ENCODE measurements at regions of chrX and their contacts with region 1.

Region 1: GRCh38 chrX:79366873-79367749 is at the start of gene ITM2A:
- DNase-seq: peak; percentile 64 to 79 (median 71)
- H3K4me3 ChIP-seq: peak within 1 kb of the TSS; percentile 65 to 84
- H3K4me3 Mint-ChIP-seq: peak within 1 kb of the TSS; percentile 91 to 99 (median 94)
- H3K27ac ChIP-seq: peak within 1 kb of the TSS; percentile 95
- H3K27ac Mint-ChIP-seq: peak within 1 kb of the TSS; percentile 97 to 99 (median 97)
- H3K4me1 ChIP-seq: peaks cover 27% of the 10 kb centered on the region
- H3K4me1 Mint-ChIP-seq: peaks cover 17 to 27% (median 22%) of the 10 kb centered on the region in 4 donors
- H3K27me3 ChIP-seq: no peaks in the 10 kb centered on the region
- H3K27me3 Mint-ChIP-seq: no peaks in the 10 kb centered on the region
- total RNA-seq, gene ITM2A: 147 to 169 TPM

Region 2: GRCh38 chrX:79161655-79162054 is 205.5 kb before region 1 on chrX:
- CTCF ChIA-PET with region 1: no interaction called
- POLR2A ChIA-PET with region 1: interaction called, 7 read pairs
- intact Hi-C with region 1: loop called (anchors 5 kb)
- DNase-seq: peak; percentile 73 to 85 (median 79)
- H3K4me3 ChIP-seq: peak overlapping the region; percentile 45 to 55
- H3K4me3 Mint-ChIP-seq: peak overlapping the region; percentile 75 to 97 (median 94)
- H3K27ac ChIP-seq: peak overlapping the region; percentile 51
- H3K27ac Mint-ChIP-seq: peak overlapping the region; percentile 87 to 98 (median 95)
- H3K4me1 ChIP-seq: peaks cover 90% of the 10 kb centered on the region
- H3K4me1 Mint-ChIP-seq: peaks cover 37 to 85% (median 53%) of the 10 kb centered on the region in 4 donors
- H3K27me3 ChIP-seq: no peaks in the 10 kb centered on the region
- H3K27me3 Mint-ChIP-seq: no peaks in the 10 kb centered on the region

Region 3: DNA sequence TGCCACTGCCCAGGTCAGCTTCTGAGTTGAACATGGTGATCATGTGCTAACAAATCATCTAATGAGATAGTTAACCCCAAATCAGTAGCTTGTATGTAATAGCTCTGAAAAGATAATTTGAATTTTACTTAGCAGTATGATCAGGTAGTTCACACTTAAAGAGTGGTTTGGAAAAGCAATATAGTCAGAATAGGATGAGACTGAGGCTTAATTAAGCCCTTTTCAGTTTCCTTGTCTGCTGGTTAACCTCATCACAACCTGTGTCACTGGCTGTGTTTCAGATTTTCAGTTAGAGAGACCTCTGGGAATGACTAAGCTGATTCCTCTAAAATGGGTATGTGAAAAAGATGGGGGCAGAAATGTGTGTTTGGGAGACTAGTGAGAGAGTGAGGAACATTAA is 184.5 kb before region 1 on chrX:
- CTCF ChIA-PET with region 1: no interaction called
- POLR2A ChIA-PET with region 1: interaction called, 11 read pairs
- intact Hi-C with region 1: no loop called
- DNase-seq: no peak
- H3K4me3 ChIP-seq: no peak overlapping the region
- H3K4me3 Mint-ChIP-seq: peak overlapping the region in 7 of 8 donors; percentile 18 to 85 (median 50)
- H3K27ac ChIP-seq: peak overlapping the region; percentile 43
- H3K27ac Mint-ChIP-seq: peak overlapping the region; percentile 71 to 92 (median 86)
- H3K4me1 ChIP-seq: peaks cover 83% of the 10 kb centered on the region
- H3K4me1 Mint-ChIP-seq: peaks cover 28 to 72% (median 47%) of the 10 kb centered on the region in 4 donors
- H3K27me3 ChIP-seq: no peaks in the 10 kb centered on the region
- H3K27me3 Mint-ChIP-seq: no peaks in the 10 kb centered on the region

Region 4: DNA sequence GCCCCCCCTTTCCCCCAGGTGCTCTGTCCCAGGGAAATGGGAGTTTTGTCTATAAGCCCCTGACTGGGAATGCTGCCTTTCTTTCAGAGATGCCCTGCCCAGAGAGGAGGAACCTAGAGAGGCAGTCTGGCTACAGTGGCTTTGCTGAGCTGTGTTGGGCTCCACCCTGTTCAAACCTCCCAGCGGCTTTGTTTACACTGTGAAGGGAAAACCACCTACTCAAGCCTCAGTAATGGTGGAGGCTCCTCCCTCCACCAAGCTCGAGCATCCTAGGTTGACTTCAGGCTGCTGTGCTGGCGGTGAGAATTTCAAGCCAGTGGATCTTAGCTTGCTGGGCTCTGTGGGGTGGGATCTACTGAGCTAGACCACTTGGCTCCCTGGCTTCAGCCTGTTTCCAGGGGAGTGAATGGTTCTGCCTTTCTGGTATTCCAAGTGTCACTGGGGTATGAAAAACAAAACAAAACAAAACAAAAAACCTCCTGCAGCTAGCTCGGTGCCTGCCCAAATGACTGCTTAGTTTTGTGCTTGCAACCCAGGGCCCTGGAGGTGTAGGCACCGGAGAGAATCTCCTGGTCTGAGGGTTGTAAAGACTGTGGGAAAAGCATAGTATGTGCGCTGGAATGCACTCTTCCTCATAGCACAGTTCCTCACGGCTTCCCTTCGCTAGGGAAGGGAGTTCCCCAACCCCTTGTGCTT is 41.7 kb before region 1 on chrX:
- CTCF ChIA-PET with region 1: interaction called, 4 read pairs
- POLR2A ChIA-PET with region 1: interaction called, 19 read pairs
- intact Hi-C with region 1: loop called (anchors 5 kb)
- DNase-seq: peak; percentile 50 to 65 (median 62)
- H3K4me3 ChIP-seq: peak overlapping the region in 1 of 2 donors; percentile 9
- H3K4me3 Mint-ChIP-seq: peak overlapping the region; percentile 79 to 92 (median 86)
- H3K27ac ChIP-seq: peak overlapping the region; percentile 42
- H3K27ac Mint-ChIP-seq: peak overlapping the region; percentile 87 to 97 (median 95)
- H3K4me1 ChIP-seq: peaks cover 11% of the 10 kb centered on the region
- H3K4me1 Mint-ChIP-seq: peaks cover 14 to 27% (median 21%) of the 10 kb centered on the region in 4 donors
- H3K27me3 ChIP-seq: no peaks in the 10 kb centered on the region
- H3K27me3 Mint-ChIP-seq: no peaks in the 10 kb centered on the region

Region 5: DNA sequence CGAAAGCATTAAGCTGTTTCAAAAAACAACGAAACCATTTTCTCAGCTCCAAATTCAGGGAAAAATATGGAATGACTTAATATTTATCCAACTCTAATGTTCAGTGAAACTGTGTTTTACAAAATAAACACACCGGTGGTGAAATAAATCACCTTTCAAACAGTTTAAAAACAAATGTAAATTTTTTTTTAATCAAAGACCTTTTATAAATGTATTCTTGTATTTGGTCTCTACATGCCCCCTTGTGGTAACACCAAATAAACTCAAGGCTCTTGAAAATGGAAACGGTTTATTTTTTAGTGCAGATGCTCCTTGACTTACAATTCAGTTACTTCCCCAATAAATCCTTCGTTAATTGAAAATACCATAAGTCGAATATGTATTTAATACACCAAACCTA is 45.9 kb after region 1 on chrX:
- CTCF ChIA-PET with region 1: interaction called, 15 read pairs
- POLR2A ChIA-PET with region 1: interaction called, 18 read pairs
- intact Hi-C with region 1: loop called (anchors 5 kb)
- DNase-seq: peak in 4 of 5 donors; percentile 48 to 54 (median 50)
- H3K4me3 ChIP-seq: peak overlapping the region; percentile 23 to 34
- H3K4me3 Mint-ChIP-seq: peak overlapping the region; percentile 71 to 84 (median 82)
- H3K27ac ChIP-seq: peak overlapping the region; percentile 56
- H3K27ac Mint-ChIP-seq: peak overlapping the region; percentile 41 to 88 (median 82)
- H3K4me1 ChIP-seq: peaks cover 7% of the 10 kb centered on the region
- H3K4me1 Mint-ChIP-seq: peaks cover 18 to 35% (median 22%) of the 10 kb centered on the region in 4 donors
- H3K27me3 ChIP-seq: no peaks in the 10 kb centered on the region
- H3K27me3 Mint-ChIP-seq: no peaks in the 10 kb centered on the region

Region 6: DNA sequence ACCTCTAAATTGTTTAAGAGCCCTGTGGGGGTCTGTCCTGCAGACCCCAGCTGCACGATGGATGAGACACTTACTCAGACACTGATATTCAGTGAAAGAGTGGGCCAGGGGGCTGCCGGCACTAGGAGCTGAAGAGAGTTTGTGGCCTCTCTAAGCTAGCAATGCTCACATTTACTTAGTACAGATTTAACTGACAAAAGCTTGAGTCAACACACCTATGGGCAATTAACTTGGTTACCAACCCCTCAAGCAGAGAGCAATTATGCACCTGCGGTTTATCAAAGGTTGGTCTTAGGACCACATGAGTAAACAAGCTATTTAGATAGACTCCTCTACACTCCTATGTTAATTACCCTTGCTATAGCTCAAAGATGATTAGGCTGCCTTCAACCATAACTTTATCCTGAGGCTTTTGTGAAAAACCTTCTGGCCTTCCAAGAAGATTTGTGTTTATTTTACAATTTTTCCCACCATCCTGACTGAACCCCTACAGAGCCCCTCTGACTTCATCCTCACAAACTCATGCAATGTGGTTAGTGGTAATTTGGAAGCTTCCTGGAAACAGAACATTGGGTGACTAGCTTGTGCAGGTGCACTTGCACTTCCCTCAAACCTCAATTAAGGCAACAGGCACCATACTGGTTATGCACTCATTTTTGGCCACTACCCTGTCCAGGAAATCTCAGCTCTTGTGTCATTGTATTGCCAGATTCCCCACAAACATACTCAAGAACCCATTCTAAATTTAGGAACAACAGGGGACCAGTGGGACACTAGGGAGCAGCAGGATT is 234.4 kb after region 1 on chrX:
- CTCF ChIA-PET with region 1: no interaction called
- POLR2A ChIA-PET with region 1: no interaction called
- intact Hi-C with region 1: no loop called
- DNase-seq: no peak
- H3K4me3 ChIP-seq: no peak overlapping the region
- H3K4me3 Mint-ChIP-seq: no peak overlapping the region
- H3K27ac ChIP-seq: no peak overlapping the region
- H3K27ac Mint-ChIP-seq: no peak overlapping the region
- H3K4me1 ChIP-seq: no peaks in the 10 kb centered on the region
- H3K4me1 Mint-ChIP-seq: no peaks in the 10 kb centered on the region
- H3K27me3 ChIP-seq: no peaks in the 10 kb centered on the region
- H3K27me3 Mint-ChIP-seq: peaks cover 2 to 3% of the 10 kb centered on the region in 2 donors